ENCODE measurements at regions of chr3 and their contacts with region 1.

Region 1: DNA sequence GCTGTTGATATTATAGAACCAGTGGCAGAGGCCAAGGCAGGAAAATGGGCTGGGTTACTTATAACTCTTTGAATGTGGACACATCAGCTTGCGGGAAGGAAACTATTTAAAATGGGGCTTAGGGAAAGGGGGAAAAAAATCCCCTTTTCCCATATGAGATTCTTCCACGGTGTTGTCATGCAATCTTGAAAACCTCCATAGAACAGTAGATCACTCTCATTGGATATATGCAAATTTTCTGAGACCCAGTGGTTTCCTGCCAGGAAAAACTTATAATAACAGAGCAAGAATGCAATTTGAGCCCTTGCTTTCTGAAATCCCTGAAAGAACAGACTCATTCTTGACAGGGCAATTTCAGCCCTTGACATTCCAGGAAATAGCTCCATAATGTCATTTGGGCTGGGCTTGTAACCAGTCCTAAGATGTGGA is 31.1 kb downstream of the TMEM212 start:
- DNase-seq: peak; percentile 69
- H3K4me3 Mint-ChIP-seq: peak overlapping the region; percentile 36
- H3K27ac Mint-ChIP-seq: peak overlapping the region; percentile 97
- H3K4me1 Mint-ChIP-seq: peaks cover 74% of the 10 kb centered on the region
- H3K27me3 Mint-ChIP-seq: no peaks in the 10 kb centered on the region
- CTCF ChIP-seq: no peak

Region 2: GRCh38 chr3:171809821-171810628 is 64.2 kb before region 1 on chr3 and contains the start of gene PLD1:
- CTCF ChIA-PET with region 1: no interaction called
- intact Hi-C with region 1: loop called (anchors 2 kb)
- DNase-seq: peak; percentile 97
- H3K4me3 Mint-ChIP-seq: peak within 1 kb of the TSS; percentile 96
- H3K27ac Mint-ChIP-seq: peak within 1 kb of the TSS; percentile 94
- H3K4me1 Mint-ChIP-seq: peaks cover 62% of the 10 kb centered on the region
- H3K27me3 Mint-ChIP-seq: no peaks in the 10 kb centered on the region
- CTCF ChIP-seq: no peak
- total RNA-seq, gene PLD1: 58.5 and 61.2 TPM in 2 replicates

Region 3: GRCh38 chr3:171844873-171845272 is 29.4 kb before region 1 on chr3:
- CTCF ChIA-PET with region 1: no interaction called
- intact Hi-C with region 1: loop called (anchors 1 kb)
- DNase-seq: no peak
- H3K4me3 Mint-ChIP-seq: no peak overlapping the region
- H3K27ac Mint-ChIP-seq: peak overlapping the region; percentile 31
- H3K4me1 Mint-ChIP-seq: peaks cover 63% of the 10 kb centered on the region
- H3K27me3 Mint-ChIP-seq: no peaks in the 10 kb centered on the region
- CTCF ChIP-seq: no peak

Region 4: DNA sequence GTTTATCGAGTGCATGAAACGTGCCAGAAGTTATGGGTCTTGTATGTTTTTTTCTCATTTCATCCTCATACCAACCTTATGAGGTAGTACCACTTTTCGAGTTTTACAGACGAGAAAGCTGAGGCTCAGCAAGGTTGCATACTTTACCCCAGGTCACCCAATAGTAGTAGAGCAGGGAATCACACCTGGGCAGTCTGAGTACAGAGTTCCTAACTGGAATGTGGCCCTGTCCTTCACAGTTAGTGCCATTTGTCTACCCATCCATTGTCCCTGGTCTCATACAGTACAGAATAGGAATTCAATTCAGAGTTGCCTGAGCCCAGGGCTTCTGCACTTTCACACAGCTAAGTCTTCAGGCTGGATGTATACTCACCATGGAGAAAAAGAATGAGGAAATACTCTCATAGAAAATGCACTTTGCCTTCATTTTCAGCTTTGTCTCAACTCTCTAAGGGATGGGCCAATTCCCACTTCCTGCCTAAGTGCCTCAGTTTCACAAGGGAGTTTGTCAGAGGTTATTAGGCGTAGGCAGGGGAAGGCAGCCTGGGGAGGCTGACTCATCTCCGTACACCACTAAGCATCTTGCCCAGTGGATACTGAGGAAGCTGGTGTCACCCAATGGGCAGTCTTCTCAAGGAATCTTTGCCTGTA is 62.1 kb after region 1 on chr3:
- CTCF ChIA-PET with region 1: interaction called, 4 read pairs
- intact Hi-C with region 1: loop called (anchors 1 kb)
- DNase-seq: peak; percentile 84
- H3K4me3 Mint-ChIP-seq: peak overlapping the region; percentile 50
- H3K27ac Mint-ChIP-seq: peak overlapping the region; percentile 73
- H3K4me1 Mint-ChIP-seq: peaks cover 91% of the 10 kb centered on the region
- H3K27me3 Mint-ChIP-seq: no peaks in the 10 kb centered on the region
- CTCF ChIP-seq: no peak

Region 5: DNA sequence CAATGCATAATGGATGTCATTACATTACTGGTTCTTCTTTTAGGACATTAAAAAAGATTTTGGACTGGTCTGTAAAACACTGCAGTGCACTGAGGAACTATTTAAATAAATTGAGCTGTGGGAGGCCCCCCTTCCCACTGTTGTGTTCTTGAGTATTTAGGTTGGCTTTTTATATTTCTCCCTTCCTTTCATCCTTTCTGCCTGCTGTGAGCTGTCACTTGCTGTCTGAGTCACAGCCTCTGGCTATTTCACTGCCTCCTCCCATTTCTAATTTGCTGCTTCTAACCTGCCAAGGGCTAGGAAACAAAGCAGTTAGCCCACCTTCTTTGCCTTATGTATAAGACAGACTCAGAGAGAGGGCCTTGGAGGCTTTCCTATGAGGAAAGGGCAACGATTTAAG is 76.1 kb after region 1 on chr3:
- CTCF ChIA-PET with region 1: no interaction called
- intact Hi-C with region 1: loop called (anchors 1 kb)
- DNase-seq: no peak
- H3K4me3 Mint-ChIP-seq: no peak overlapping the region
- H3K27ac Mint-ChIP-seq: peak overlapping the region; percentile 81
- H3K4me1 Mint-ChIP-seq: peaks cover 59% of the 10 kb centered on the region
- H3K27me3 Mint-ChIP-seq: no peaks in the 10 kb centered on the region
- CTCF ChIP-seq: no peak

Region 6: DNA sequence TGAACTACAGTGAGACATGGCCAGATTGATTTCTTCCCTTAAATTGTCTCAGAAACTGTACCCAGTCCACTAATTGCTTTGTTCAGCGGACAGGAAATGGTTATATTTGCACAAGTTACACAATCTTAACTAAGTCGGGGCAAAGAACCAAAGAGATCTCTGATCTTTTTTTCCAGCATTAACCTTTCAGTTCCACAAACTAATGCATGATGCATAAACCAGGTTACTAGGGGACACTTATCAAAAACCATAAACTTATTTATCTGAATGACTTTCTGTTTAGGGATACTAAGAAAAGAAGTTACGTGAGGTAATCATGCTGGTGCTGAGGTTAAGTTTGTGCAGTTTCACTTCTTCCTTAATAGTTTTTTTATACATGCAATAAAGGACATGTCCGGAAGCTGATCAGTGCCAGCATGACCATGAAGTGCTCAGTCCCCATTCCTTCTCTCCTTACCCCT is 187.5 kb after region 1 on chr3:
- CTCF ChIA-PET with region 1: no interaction called
- intact Hi-C with region 1: no loop called
- DNase-seq: no peak
- H3K4me3 Mint-ChIP-seq: peak overlapping the region; percentile 39
- H3K27ac Mint-ChIP-seq: peak overlapping the region; percentile 51
- H3K4me1 Mint-ChIP-seq: peaks cover 87% of the 10 kb centered on the region
- H3K27me3 Mint-ChIP-seq: no peaks in the 10 kb centered on the region
- CTCF ChIP-seq: no peak

Region 7: DNA sequence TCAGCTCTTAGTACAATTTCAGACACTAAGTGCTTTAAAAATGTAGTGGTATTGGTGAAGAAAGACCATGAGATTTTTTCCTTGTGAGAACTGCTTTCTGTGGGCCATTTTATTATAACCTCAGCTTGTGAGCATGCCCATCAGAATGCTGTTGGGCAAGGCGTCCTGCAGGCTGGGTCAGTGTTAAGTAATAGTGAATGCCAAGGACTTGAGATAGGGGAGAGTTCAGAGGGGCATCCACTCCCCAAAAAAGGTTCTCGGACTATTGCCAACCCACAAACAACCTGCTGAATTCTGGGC is 386.2 kb after region 1 on chr3:
- CTCF ChIA-PET with region 1: no interaction called
- intact Hi-C with region 1: loop called (anchors 5 kb)
- DNase-seq: peak; percentile 82
- H3K4me3 Mint-ChIP-seq: peak overlapping the region; percentile 17
- H3K27ac Mint-ChIP-seq: peak overlapping the region; percentile 76
- H3K4me1 Mint-ChIP-seq: peaks cover 81% of the 10 kb centered on the region
- H3K27me3 Mint-ChIP-seq: no peaks in the 10 kb centered on the region
- CTCF ChIP-seq: no peak